ENCODE measurements at regions of chr11 and their contacts with region 1.

Region 1: GRCh38 chr11:46308631-46309419 is 31.4 kb downstream of the CREB3L1 start:
- DNase-seq: peak in 5 of 6 donors; percentile 48 to 83 (median 68)
- ATAC-seq: peak; percentile 46 to 92 (median 84)
- H3K4me3 ChIP-seq: no peak overlapping the region
- H3K27ac ChIP-seq: no peak overlapping the region
- H3K4me1 ChIP-seq: no peaks in the 10 kb centered on the region
- H3K27me3 ChIP-seq: no peaks in the 10 kb centered on the region
- CTCF ChIP-seq: peak in 3 of 4 donors; percentile 57 to 73 (median 64)

Region 2: DNA sequence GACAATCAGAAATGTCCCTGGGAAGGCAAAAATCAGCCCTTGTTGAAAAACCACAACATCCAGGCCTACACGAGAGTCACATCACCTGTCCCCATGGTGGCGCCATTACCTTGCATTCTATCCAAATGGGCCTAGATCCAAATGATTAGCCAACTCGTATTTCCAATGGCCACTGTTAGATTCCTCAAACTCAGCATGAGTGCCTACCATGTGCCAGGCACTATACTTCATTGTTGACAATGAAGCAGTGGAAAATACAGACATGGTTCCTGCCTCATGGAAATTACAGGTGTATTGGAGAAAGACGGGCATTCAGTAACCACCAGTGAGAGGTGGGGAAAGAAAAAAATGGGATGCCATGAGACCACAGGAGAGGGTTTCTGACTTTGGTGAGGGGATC is 61.2 kb before region 1 on chr11:
- intact Hi-C with region 1: loop called in 2 of 3 experiments (anchors 5 kb)
- DNase-seq: peak in 4 of 6 donors; percentile 57 to 85 (median 70)
- ATAC-seq: peak; percentile 61 to 76 (median 74)
- H3K4me3 ChIP-seq: no peak overlapping the region
- H3K27ac ChIP-seq: peak overlapping the region in 1 of 4 donors; percentile 22
- H3K4me1 ChIP-seq: peaks cover 0 to 17% (median 3%) of the 10 kb centered on the region in 3 donors
- H3K27me3 ChIP-seq: no peaks in the 10 kb centered on the region
- CTCF ChIP-seq: peak in 2 of 4 donors; percentile 42 to 52